Ovary (tissue), 10 donors: ENCODE measurements at regions of chr1 and their contacts with region 1.

Region 1: GRCh38 chr1:92858564-92859399 is 26.9 kb downstream of the RPL5 start:
- DNase-seq: peak in 2 of 5 donors; percentile 21 to 65
- H3K4me3 ChIP-seq: peak overlapping the region; percentile 15
- H3K27ac ChIP-seq: no peak overlapping the region
- H3K4me1 ChIP-seq: no peaks in the 10 kb centered on the region
- H3K27me3 ChIP-seq: no peaks in the 10 kb centered on the region
- CTCF ChIP-seq: peak; percentile 55 to 99 (median 98)
- EP300 ChIP-seq: no peak
- POLR2A ChIP-seq: no peak

Region 2: DNA sequence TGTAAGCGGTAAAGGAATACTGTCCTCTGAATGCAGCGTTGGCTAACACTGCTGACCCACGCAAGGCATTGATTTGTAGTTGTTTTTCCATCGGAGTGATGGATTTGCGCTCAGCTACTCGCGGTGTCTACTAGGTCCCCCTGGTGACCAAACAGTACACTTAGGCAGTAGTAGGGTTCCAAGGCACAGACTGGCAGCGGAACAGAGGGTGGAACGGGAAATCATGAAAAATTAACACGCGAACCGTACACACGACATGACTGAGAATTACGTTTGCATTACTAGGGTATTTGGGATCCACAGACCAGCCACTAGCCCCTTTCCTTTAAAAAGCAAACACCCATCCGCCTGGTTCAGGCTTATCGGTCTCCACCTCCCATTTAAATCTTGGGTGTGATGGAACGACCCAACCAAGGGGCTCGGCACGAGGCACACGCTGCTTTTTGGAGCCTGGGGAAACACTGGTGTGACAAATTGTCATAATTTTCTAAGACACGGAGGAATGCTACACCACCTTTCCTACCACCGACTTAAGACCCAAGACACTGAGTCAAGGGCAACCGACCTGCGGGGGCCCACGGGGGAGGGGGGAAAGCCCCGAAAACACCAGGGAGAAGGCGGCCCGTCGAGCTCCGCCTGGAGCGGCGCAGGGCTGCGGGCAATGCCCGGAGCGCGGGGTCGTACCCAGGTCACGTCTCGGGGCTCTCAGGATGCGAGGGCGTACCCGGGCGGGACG is 101.8 kb after region 1 on chr1:
- intact Hi-C with region 1: loop called in 2 of 4 experiments (anchors 5 to 10 kb)
- DNase-seq: peak; percentile 39 to 65 (median 50)
- H3K4me3 ChIP-seq: peak overlapping the region; percentile 56
- H3K27ac ChIP-seq: peak overlapping the region; percentile 89 to 93
- H3K4me1 ChIP-seq: peaks cover 4% of the 10 kb centered on the region
- H3K27me3 ChIP-seq: no peaks in the 10 kb centered on the region
- CTCF ChIP-seq: peak in 2 of 3 donors; percentile 56 to 62
- EP300 ChIP-seq: no peak
- POLR2A ChIP-seq: no peak

Region 3: GRCh38 chr1:92994105-92994712 is 135.4 kb after region 1 on chr1:
- intact Hi-C with region 1: loop called (anchors 2 to 5 kb)
- DNase-seq: peak in 4 of 5 donors; percentile 39 to 81 (median 72)
- H3K4me3 ChIP-seq: no peak overlapping the region
- H3K27ac ChIP-seq: no peak overlapping the region
- H3K4me1 ChIP-seq: no peaks in the 10 kb centered on the region
- H3K27me3 ChIP-seq: no peaks in the 10 kb centered on the region
- CTCF ChIP-seq: peak; percentile 86 to 88 (median 86)
- EP300 ChIP-seq: no peak
- POLR2A ChIP-seq: no peak

Region 4: GRCh38 chr1:93804412-93804811 is 945.6 kb after region 1 on chr1:
- intact Hi-C with region 1: no loop called
- DNase-seq: no peak
- H3K4me3 ChIP-seq: no peak overlapping the region
- H3K27ac ChIP-seq: no peak overlapping the region
- H3K4me1 ChIP-seq: no peaks in the 10 kb centered on the region
- H3K27me3 ChIP-seq: no peaks in the 10 kb centered on the region
- CTCF ChIP-seq: no peak
- EP300 ChIP-seq: no peak
- POLR2A ChIP-seq: no peak